Ascending aorta (tissue), 2 donors: ENCODE measurements at regions of chr2 and their contacts with region 1.

Region 1: GRCh38 chr2:102442967-102443828 is 20.2 kb downstream of the IL18RAP start:
- DNase-seq: no peak
- H3K4me3 ChIP-seq: no peak overlapping the region
- H3K27ac ChIP-seq: no peak overlapping the region
- H3K4me1 ChIP-seq: no peaks in the 10 kb centered on the region
- H3K27me3 ChIP-seq: no peaks in the 10 kb centered on the region
- CTCF ChIP-seq: peak; percentile 20 to 57 (median 39)

Region 2: GRCh38 chr2:102251042-102251848 is 192.0 kb before region 1 on chr2:
- intact Hi-C with region 1: loop called (anchors 10 kb)
- DNase-seq: no peak
- H3K4me3 ChIP-seq: peak overlapping the region; percentile 59 to 61
- H3K27ac ChIP-seq: no peak overlapping the region
- H3K4me1 ChIP-seq: peaks cover 0 to 5% of the 10 kb centered on the region in 2 donors
- H3K27me3 ChIP-seq: no peaks in the 10 kb centered on the region
- CTCF ChIP-seq: peak; percentile 31 to 51 (median 49)

Region 3: DNA sequence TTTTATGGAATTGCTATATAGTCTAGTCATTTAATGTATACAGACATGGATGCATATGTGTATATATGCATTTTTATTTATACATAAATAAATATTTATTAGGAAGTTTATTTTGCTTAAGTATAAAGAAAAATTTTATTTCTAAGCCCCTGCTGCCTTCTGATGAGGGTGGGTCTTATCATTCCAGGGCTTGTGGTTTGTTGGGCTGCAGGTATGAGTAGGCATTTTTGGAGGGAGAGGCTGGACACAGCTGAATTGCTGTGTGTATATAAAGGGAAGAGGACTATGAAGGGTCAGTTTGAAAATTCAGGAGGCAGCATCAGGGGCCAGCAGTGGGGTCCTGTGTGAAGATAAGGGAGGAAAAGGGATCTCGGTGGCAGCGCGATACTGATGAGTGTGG is 508.1 kb after region 1 on chr2:
- intact Hi-C with region 1: no loop called
- DNase-seq: no peak
- H3K4me3 ChIP-seq: no peak overlapping the region
- H3K27ac ChIP-seq: no peak overlapping the region
- H3K4me1 ChIP-seq: no peaks in the 10 kb centered on the region
- H3K27me3 ChIP-seq: no peaks in the 10 kb centered on the region
- CTCF ChIP-seq: no peak

Region 4: GRCh38 chr2:103254611-103255010 is 811.4 kb after region 1 on chr2:
- intact Hi-C with region 1: no loop called
- DNase-seq: no peak
- H3K4me3 ChIP-seq: no peak overlapping the region
- H3K27ac ChIP-seq: no peak overlapping the region
- H3K4me1 ChIP-seq: no peaks in the 10 kb centered on the region
- H3K27me3 ChIP-seq: no peaks in the 10 kb centered on the region
- CTCF ChIP-seq: no peak